Activated CD4-positive, alpha-beta T cell treated with anti-CD3 and anti-CD28 coated beads for 36 hours (primary cell): ENCODE measurements at regions of chr2 and their contacts with region 1.

Region 1: GRCh38 chr2:9782197-9782719 is 61.0 kb upstream of the TAF1B start:
- DNase-seq: peak; percentile 89
- ATAC-seq: peak; percentile 80
- H3K4me3 Mint-ChIP-seq: peak overlapping the region; percentile 53
- H3K27ac Mint-ChIP-seq: peak overlapping the region; percentile 93
- H3K4me1 Mint-ChIP-seq: peaks cover 57% of the 10 kb centered on the region
- H3K27me3 Mint-ChIP-seq: no peaks in the 10 kb centered on the region

Region 2: GRCh38 chr2:9057939-9058761 is 724.1 kb before region 1 on chr2:
- CTCF ChIA-PET with region 1: no interaction called
- POLR2A ChIA-PET with region 1: no interaction called
- intact Hi-C with region 1: no loop called
- DNase-seq: peak; percentile 28
- ATAC-seq: peak; percentile 30
- H3K4me3 Mint-ChIP-seq: no peak overlapping the region
- H3K27ac Mint-ChIP-seq: no peak overlapping the region
- H3K4me1 Mint-ChIP-seq: peaks cover 9% of the 10 kb centered on the region
- H3K27me3 Mint-ChIP-seq: peaks cover 2% of the 10 kb centered on the region

Region 3: GRCh38 chr2:9594366-9595054 is 187.7 kb before region 1 on chr2:
- CTCF ChIA-PET with region 1: interaction called, 4 read pairs
- POLR2A ChIA-PET with region 1: interaction called, 4 read pairs
- intact Hi-C with region 1: loop called in 1 of 2 experiments (anchors 1 kb)
- DNase-seq: peak; percentile 21
- ATAC-seq: peak; percentile 89
- H3K4me3 Mint-ChIP-seq: no peak overlapping the region
- H3K27ac Mint-ChIP-seq: peak overlapping the region; percentile 82
- H3K4me1 Mint-ChIP-seq: peaks cover 83% of the 10 kb centered on the region
- H3K27me3 Mint-ChIP-seq: no peaks in the 10 kb centered on the region

Region 4: DNA sequence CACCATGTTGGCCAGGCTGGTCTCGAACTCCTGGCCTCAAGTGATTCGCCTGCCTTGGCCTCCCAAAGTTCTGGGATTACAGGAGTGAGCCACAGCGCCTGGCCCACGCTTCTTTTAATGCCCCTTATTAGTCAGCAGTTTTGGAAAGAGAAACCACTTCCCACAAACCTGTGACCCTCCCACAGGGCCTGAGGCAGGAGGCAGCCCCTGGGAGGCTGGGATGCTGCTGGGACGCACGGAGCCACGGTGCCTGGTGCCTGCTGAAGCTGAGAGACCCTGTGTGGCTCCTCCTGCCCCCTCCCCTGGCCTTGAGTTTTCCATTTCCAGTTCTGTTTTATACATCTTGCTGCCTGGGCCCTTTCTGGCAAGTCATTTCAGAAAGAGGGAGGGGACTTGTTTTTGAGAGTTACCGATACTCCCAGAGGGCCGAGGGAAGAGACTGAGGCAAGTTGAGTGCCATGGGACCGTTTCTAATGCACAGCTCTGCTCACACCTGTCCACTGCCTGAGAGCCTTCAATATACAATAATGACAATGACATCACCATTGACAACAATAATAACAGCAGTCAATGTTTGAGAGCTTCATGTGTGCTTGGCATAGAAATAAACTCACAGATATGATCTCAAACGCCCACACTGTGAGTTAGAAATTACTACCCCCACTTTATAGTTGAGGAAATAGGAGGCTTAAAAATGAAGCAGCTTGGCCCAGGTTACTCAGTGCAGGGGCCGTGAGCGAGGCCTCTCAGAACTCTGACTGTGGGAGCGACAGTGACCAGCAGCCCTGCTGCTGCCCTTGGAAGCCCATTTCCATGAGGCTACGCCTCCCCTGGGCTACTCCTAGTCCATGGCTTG is 73.3 kb before region 1 on chr2:
- CTCF ChIA-PET with region 1: no interaction called
- POLR2A ChIA-PET with region 1: no interaction called
- intact Hi-C with region 1: loop called in 1 of 2 experiments (anchors 2 kb)
- DNase-seq: peak; percentile 71
- ATAC-seq: peak; percentile 63
- H3K4me3 Mint-ChIP-seq: peak overlapping the region; percentile 10
- H3K27ac Mint-ChIP-seq: peak overlapping the region; percentile 92
- H3K4me1 Mint-ChIP-seq: peaks cover 56% of the 10 kb centered on the region
- H3K27me3 Mint-ChIP-seq: no peaks in the 10 kb centered on the region

Region 5: DNA sequence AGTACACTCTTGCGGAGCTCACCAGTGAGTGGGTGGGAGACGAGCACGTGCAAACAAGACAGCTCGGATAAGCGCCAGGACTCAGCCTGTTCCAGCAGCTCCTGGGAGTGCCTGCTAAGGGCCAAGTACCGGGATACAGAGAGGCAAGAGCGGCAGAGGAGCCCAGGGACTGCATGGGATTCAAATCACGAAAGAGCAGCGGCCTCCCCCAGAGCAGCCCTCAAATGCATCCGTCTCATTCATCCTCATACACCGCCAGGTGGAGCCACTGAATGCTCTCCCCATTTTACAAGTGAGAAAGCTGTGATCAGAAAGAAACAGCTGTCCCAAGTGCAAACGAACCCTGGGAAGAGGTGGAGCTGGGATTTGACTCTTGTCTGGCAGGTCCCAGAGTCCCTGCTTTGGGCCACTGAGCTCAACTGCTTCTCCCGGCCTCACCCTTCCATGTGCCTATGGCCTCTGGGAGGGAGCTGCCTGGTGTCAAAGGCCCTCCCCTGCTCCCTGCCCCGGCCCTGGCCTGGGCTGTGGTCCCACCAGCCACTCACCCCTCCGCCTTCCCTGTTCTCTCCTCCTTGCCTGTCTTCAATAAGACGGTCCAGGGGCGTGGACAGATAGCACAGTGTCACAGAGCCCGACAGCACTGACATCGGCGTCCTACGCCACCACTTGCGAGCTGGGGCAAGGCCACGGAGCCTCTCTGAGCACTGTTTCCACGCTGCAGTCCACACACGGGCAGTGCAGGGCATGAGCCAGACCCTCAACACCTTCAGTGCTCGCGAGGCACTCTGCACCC is 11.8 kb before region 1 on chr2:
- CTCF ChIA-PET with region 1: interaction called, 23 read pairs
- POLR2A ChIA-PET with region 1: no interaction called
- intact Hi-C with region 1: no loop called
- DNase-seq: peak; percentile 73
- ATAC-seq: peak; percentile 74
- H3K4me3 Mint-ChIP-seq: no peak overlapping the region
- H3K27ac Mint-ChIP-seq: no peak overlapping the region
- H3K4me1 Mint-ChIP-seq: peaks cover 13% of the 10 kb centered on the region
- H3K27me3 Mint-ChIP-seq: no peaks in the 10 kb centered on the region

Region 6: DNA sequence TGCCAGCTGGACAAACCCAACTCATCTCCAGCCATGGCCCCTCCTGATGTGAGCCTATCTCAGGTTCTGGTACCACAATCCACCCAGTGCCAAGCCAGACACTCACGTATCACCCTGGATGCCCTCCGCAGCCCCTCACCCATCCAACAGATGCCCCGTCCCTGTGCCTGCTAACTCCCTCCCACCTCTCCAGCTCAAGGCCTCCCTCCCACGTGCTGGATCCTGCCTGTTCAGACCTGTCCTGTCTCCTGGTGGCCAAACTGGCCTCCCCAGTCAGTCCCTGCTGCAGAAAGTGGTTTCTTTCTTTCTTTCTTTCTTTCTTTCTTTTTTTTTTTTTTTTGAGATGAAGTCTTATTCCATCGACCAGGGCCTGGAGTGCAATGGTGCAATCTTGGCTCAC is 426.5 kb after region 1 on chr2:
- CTCF ChIA-PET with region 1: no interaction called
- POLR2A ChIA-PET with region 1: no interaction called
- intact Hi-C with region 1: no loop called
- DNase-seq: no peak
- ATAC-seq: no peak
- H3K4me3 Mint-ChIP-seq: no peak overlapping the region
- H3K27ac Mint-ChIP-seq: no peak overlapping the region
- H3K4me1 Mint-ChIP-seq: no peaks in the 10 kb centered on the region
- H3K27me3 Mint-ChIP-seq: no peaks in the 10 kb centered on the region